ENCODE measurements at regions of chr6 and their contacts with region 1.

Region 1: GRCh38 chr6:161242779-161243693 is 30.8 kb downstream of the AGPAT4 start:
- DNase-seq: no peak
- H3K4me3 ChIP-seq: peak overlapping the region in 2 of 3 donors; percentile 17 to 50
- H3K27ac ChIP-seq: peak overlapping the region in 1 of 2 donors; percentile 77
- H3K4me1 ChIP-seq: no peaks in the 10 kb centered on the region
- H3K27me3 ChIP-seq: no peaks in the 10 kb centered on the region
- CTCF ChIP-seq: no peak
- POLR2A ChIP-seq: no peak

Region 2: DNA sequence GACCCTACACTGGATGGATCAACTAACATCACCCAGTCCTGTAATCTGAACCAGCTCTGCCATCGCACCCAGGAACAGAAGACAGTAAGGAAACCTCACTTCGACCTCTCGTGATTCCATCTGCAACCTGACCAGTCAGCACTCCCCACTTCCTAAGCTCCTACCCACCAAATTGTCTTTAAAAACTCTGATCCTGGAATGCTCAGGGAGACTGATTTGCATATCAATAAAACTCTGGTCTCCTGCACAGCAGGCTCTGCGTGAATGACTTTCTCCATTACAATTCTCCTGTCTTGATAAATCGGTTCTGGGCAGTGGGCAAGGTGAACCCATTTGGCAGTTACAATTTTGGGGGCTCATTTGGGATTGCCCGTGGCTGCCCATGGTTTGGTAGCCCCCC is 49.1 kb after region 1 on chr6:
- intact Hi-C with region 1: no loop called
- DNase-seq: no peak
- H3K4me3 ChIP-seq: no peak overlapping the region
- H3K27ac ChIP-seq: no peak overlapping the region
- H3K4me1 ChIP-seq: no peaks in the 10 kb centered on the region
- H3K27me3 ChIP-seq: no peaks in the 10 kb centered on the region
- CTCF ChIP-seq: no peak
- POLR2A ChIP-seq: no peak

Region 3: GRCh38 chr6:161476711-161477110 is 233.7 kb after region 1 on chr6:
- intact Hi-C with region 1: loop called (anchors 5 kb)
- DNase-seq: peak in 1 of 2 donors; percentile 27
- H3K4me3 ChIP-seq: peak overlapping the region in 1 of 3 donors; percentile 23
- H3K27ac ChIP-seq: peak overlapping the region; percentile 29 to 70
- H3K4me1 ChIP-seq: no peaks in the 10 kb centered on the region
- H3K27me3 ChIP-seq: no peaks in the 10 kb centered on the region
- CTCF ChIP-seq: no peak
- POLR2A ChIP-seq: no peak